GM10248 (cell line): ENCODE measurements at regions of chr20 and their contacts with region 1.

Region 1: DNA sequence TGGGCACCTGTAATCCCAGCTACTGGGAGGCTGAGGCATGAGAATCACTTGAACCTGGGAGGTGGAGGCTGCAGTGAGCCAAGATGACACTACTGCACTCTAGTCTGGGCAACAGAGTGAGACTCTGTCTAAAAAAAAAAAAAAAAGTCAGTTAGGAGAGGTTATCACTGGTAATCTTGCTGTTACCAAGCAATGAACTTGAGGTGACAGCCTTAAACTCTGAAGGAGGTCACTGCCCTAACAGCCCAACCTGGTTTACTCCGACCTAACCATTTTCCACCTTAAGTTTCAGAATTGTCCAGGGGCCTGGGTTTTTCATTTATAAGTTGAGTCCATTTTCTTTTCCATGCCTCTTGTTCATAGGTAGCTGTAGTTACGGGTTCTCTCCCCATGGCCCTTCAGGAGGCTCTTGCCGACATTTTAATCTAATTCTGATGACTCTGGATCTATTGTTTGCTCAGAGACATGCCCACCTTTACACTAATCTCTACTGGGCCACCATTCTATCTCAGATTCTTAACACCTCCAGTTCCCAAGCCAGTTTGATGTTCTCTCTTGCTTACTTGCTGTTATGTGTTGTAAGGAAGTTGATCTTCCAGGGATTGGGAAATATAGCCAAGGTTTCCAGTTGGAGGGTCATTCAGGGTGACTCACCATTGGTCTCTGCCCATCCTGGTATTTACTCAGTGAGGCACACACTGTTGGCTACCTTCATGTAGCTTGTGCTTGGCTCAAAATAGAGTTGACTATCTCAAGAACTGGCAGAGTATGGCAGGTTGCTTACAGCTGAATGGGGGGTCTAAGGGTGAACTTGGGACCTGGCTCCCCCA is 29.1 kb downstream of the SHLD1 start:
- DNase-seq: no peak
- CTCF ChIP-seq: no peak

Region 2: GRCh38 chr20:5222919-5223634 is 556.2 kb before region 1 on chr20:
- CTCF ChIA-PET with region 1: no interaction called
- POLR2A ChIA-PET with region 1: no interaction called
- DNase-seq: peak; percentile 72
- CTCF ChIP-seq: peak; percentile 95

Region 3: GRCh38 chr20:5557123-5557522 is 222.2 kb before region 1 on chr20:
- CTCF ChIA-PET with region 1: interaction called, 15 read pairs
- POLR2A ChIA-PET with region 1: no interaction called
- DNase-seq: peak; percentile 50
- CTCF ChIP-seq: peak; percentile 69

Region 4: GRCh38 chr20:6184080-6184479 is 404.8 kb after region 1 on chr20:
- CTCF ChIA-PET with region 1: no interaction called
- POLR2A ChIA-PET with region 1: no interaction called
- DNase-seq: no peak
- CTCF ChIP-seq: no peak